Esophagus muscularis mucosa (tissue), 4 donors: ENCODE measurements at regions of chr19 and their contacts with region 1.

Region 1: GRCh38 chr19:15379083-15379995 is at the start of gene AKAP8:
- DNase-seq: peak; percentile 100
- H3K4me3 ChIP-seq: peak within 1 kb of the TSS; percentile 74 to 99 (median 90)
- H3K27ac ChIP-seq: peak within 1 kb of the TSS; percentile 92 to 99 (median 98)
- H3K4me1 ChIP-seq: peaks cover 44 to 52% (median 50%) of the 10 kb centered on the region in 4 donors
- H3K27me3 ChIP-seq: no peaks in the 10 kb centered on the region
- CTCF ChIP-seq: no peak
- EP300 ChIP-seq: no peak
- POLR2A ChIP-seq: peak; percentile 55
- total RNA-seq, gene AKAP8: 25.2 to 34.3 (median 29.6) TPM

Region 2: DNA sequence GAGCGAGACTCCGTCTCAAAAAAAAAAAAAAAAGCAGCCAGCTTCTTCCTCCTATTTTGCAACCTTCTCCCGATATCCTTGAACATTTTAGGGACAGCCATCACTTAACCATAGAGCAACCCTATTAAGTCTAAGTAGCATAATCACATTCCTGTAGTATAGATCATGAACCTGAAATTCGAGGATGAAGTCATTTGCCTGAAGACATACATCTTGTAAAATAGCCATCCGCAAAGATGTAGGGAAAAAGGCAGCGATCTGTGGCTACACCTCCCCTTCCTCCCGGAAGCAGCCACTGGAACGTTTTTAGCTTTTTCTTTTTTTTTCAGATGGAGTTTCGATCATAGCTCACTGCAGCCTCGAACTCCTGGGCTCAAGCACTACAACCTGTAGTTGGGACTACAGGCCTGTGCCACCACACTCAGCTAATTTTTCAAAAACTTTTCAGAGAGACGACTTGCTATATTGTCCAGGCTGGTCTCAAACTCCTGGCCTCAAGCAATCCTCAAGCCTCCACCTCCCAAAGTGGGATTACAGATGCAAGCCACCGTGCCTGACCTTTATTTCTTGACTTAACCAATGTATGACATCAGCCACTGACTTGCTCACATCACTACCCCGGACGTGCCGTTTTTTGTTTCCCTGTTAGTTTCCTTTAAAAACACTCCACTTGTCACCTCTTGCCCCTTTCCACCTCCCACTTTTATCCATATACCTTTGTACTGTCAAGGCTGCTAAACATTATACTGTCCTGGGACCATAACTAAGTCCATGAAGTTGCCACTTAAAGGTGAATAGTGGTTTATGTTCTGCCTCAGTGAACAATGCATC is 145.1 kb before region 1 on chr19:
- intact Hi-C with region 1: no loop called
- DNase-seq: no peak
- H3K4me3 ChIP-seq: no peak overlapping the region
- H3K27ac ChIP-seq: no peak overlapping the region
- H3K4me1 ChIP-seq: peaks cover 7 to 25% (median 24%) of the 10 kb centered on the region in 4 donors
- H3K27me3 ChIP-seq: peaks cover 0 to 36% (median 17%) of the 10 kb centered on the region in 4 donors
- CTCF ChIP-seq: no peak
- EP300 ChIP-seq: no peak
- POLR2A ChIP-seq: no peak

Region 3: DNA sequence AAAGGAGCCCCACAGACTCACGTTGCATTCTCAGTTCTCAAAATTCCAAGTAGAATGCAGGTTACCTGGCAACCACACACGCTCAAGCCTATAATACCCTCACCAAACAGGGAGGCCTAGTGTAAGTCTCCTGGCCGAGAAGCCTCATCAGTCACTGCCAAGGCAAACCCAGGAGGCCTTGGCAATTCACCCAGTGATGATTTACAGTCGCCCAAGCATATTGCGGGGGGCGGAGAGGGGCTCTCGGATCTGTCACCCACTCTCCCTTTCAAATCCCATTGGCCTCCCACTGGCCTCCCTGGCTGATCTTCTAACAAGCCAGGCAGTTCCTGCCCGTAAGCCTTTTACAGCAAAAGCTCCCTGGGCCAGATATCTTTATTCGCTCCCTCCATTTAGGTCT is 38.4 kb after region 1 on chr19:
- intact Hi-C with region 1: loop called (anchors 2 kb)
- DNase-seq: no peak
- H3K4me3 ChIP-seq: peak overlapping the region; percentile 93 to 97 (median 96)
- H3K27ac ChIP-seq: peak overlapping the region; percentile 89 to 95 (median 91)
- H3K4me1 ChIP-seq: peaks cover 51 to 64% (median 61%) of the 10 kb centered on the region in 4 donors
- H3K27me3 ChIP-seq: no peaks in the 10 kb centered on the region
- CTCF ChIP-seq: no peak
- EP300 ChIP-seq: no peak
- POLR2A ChIP-seq: no peak